ENCODE measurements at regions of chr16 and their contacts with region 1.

Region 1: DNA sequence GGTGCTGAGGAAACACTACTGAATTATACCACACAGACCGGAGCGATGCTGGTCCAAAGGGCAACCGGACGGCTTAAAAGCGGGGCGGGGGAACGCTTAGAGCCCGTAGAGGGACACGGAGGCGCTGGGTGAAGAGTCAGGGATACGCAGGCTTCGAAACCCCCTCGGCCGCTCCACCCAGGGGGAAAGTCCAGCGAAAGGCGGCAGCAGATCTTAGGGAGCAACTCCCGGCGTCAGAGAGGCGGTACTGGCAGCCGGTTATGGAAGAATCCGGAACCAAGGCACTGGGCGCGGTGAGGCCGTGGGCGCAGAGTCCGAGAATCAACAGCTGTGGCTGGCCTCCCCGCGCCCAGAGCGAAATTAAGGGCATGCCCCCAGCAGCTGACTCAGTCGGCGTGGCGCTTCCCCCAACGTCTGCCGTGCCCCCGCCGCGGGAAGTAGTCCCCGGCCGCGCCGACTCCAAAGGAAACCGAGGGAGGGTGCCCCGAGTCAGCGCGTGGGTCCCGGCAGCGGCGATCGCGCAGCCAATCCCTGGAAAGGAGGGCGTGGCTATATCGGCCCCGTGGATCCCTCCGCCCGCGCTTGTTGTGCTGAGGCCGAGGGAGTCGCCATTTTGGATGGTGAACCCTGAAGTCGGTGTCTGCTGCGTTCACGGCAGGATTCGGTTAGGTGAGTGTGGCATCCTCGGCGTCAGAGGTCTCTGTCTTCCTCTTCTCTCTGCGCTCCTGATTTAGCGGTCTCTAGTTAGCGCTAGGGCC is at the start of gene IST1:
- DNase-seq: peak; percentile 97 to 98 (median 98)
- ATAC-seq: peak; percentile 96
- H3K4me3 ChIP-seq: peak within 1 kb of the TSS; percentile 57 to 100
- H3K27ac ChIP-seq: peak within 1 kb of the TSS; percentile 80 to 99 (median 96)
- H3K4me1 ChIP-seq: peaks cover 45% of the 10 kb centered on the region
- H3K27me3 ChIP-seq: no peaks in the 10 kb centered on the region
- CTCF ChIP-seq: peak in 1 of 7 experiments; percentile 8
- POLR2A ChIP-seq: peak; percentile 93 to 96 (median 96)
- total RNA-seq, gene IST1: 60.3 to 82.8 TPM

Region 2: DNA sequence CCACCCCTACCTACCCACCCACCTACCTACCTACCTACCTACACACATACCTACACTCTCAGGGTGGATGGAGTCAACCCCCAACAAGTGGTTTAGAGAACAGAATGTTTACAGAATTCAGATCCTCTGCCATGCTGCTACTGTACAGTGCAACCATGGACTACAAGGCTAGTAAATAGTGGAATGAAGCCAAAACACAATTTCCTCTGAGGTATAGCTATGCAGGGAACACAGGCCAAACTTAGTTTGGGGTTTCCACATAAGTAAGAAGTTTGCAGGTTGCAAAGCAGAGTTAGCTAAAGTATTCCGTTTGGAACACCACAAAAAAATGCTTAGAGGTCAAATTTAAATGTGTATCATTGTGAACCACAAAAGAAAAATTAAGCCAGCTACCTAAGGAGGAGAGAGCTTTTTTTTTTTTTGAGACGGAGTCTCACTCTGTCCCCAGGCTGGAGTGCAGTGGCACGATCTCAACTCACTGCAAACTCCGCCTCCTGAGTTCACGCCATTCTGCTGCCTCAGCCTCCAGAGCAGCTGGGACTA is 83.8 kb before region 1 on chr16:
- intact Hi-C with region 1: loop called (anchors 10 kb)
- DNase-seq: no peak
- ATAC-seq: no peak
- H3K4me3 ChIP-seq: no peak overlapping the region
- H3K27ac ChIP-seq: no peak overlapping the region
- H3K4me1 ChIP-seq: peaks cover 24% of the 10 kb centered on the region
- H3K27me3 ChIP-seq: no peaks in the 10 kb centered on the region
- CTCF ChIP-seq: no peak
- POLR2A ChIP-seq: no peak